Activated T-helper 1 cell treated with anti-CD3 and anti-CD28 coated beads, Interleukin-12 subunit alpha, Interleukin-12 subunit beta, Interleukin-2, Interleukin-4 antibody, amounts not matched to agents 30 ng/mL and 10 ng/mL and 1 ng/mL, durations not matched to agents 14 hours and 24 hours and 36 hours (primary cell): ENCODE measurements at regions of chr2 and their contacts with region 1.

Region 1: GRCh38 chr2:61426267-61426897 is 44.5 kb downstream of the USP34 start:
- DNase-seq: peak; percentile 44
- H3K4me3 Mint-ChIP-seq: no peak overlapping the region
- H3K27ac Mint-ChIP-seq: peak overlapping the region; percentile 26
- H3K4me1 Mint-ChIP-seq: peaks cover 31% of the 10 kb centered on the region
- H3K27me3 Mint-ChIP-seq: no peaks in the 10 kb centered on the region

Region 2: DNA sequence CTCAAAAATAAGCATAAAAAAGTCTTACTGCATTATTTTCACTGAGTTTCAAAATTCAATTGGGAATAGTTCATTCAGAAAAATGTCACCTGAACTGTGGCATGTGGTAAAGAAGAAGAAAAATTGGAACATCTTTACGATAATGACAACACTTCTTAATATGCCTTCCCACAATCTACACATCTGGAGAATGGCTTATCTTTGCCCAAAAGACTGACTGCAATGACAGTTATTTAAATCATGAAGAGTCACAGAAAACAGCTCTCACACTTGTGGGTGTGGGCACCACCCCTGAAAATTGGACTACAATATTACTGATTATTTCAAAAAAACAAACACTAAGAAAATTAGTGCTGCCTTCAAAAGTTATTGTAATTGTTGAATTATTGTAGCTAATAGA is 107.8 kb before region 1 on chr2:
- intact Hi-C with region 1: no loop called
- DNase-seq: no peak
- H3K4me3 Mint-ChIP-seq: no peak overlapping the region
- H3K27ac Mint-ChIP-seq: no peak overlapping the region
- H3K4me1 Mint-ChIP-seq: no peaks in the 10 kb centered on the region
- H3K27me3 Mint-ChIP-seq: no peaks in the 10 kb centered on the region

Region 3: DNA sequence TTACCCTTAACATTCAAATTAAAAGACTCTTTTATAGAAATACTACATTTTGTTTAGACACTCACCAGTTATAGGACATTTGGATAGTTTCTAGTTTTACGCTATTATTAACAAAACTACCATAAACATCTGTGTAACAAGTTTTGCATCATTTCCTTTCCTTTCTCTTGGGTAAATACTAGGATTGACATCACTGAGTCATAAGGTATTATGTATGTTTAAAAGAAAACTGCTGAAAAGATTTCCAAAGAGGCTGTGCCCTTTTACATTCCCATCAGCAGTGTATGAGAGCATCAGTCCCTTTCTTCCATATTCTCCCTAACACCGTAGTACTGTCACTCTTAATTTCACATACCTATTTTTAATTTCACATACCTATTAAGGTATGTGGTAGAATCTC is 86.1 kb before region 1 on chr2:
- intact Hi-C with region 1: no loop called
- DNase-seq: no peak
- H3K4me3 Mint-ChIP-seq: no peak overlapping the region
- H3K27ac Mint-ChIP-seq: no peak overlapping the region
- H3K4me1 Mint-ChIP-seq: no peaks in the 10 kb centered on the region
- H3K27me3 Mint-ChIP-seq: no peaks in the 10 kb centered on the region

Region 4: GRCh38 chr2:61499060-61499459 is 72.7 kb after region 1 on chr2:
- intact Hi-C with region 1: no loop called
- DNase-seq: no peak
- H3K4me3 Mint-ChIP-seq: no peak overlapping the region
- H3K27ac Mint-ChIP-seq: no peak overlapping the region
- H3K4me1 Mint-ChIP-seq: peaks cover 5% of the 10 kb centered on the region
- H3K27me3 Mint-ChIP-seq: no peaks in the 10 kb centered on the region

Region 5: GRCh38 chr2:61658841-61659780 is 232.7 kb after region 1 on chr2:
- intact Hi-C with region 1: loop called (anchors 5 kb)
- DNase-seq: no peak
- H3K4me3 Mint-ChIP-seq: no peak overlapping the region
- H3K27ac Mint-ChIP-seq: no peak overlapping the region
- H3K4me1 Mint-ChIP-seq: peaks cover 6% of the 10 kb centered on the region
- H3K27me3 Mint-ChIP-seq: no peaks in the 10 kb centered on the region

Region 6: DNA sequence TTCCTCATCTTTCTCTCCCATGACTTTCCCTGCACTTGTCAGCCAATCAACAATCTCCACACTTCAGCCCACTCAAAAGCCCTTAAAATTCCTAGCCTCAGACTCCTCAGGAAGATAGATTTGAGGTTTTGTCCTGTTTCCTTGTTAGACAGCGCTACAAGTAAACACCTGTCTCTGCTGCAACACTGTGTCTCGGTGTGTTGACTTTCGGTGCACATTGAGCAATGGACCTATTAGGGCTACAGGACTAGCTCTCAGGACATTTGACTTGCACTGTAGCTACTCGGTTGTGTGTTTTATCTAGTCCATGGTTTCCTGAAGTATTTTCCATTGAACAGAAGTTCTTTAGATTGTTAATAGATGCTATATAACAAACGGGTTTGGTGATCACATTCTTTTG is 252.7 kb after region 1 on chr2:
- intact Hi-C with region 1: no loop called
- DNase-seq: no peak
- H3K4me3 Mint-ChIP-seq: no peak overlapping the region
- H3K27ac Mint-ChIP-seq: no peak overlapping the region
- H3K4me1 Mint-ChIP-seq: no peaks in the 10 kb centered on the region
- H3K27me3 Mint-ChIP-seq: peaks cover 3% of the 10 kb centered on the region